Activated CD4-positive, alpha-beta memory T cell treated with anti-CD3 and anti-CD28 coated beads for 36 hours (primary cell): ENCODE measurements at regions of chr4 and their contacts with region 1.

Region 1: GRCh38 chr4:3480528-3481112 is 17.5 kb downstream of the DOK7 start:
- DNase-seq: peak; percentile 83
- H3K4me3 Mint-ChIP-seq: no peak overlapping the region
- H3K27ac Mint-ChIP-seq: no peak overlapping the region
- H3K4me1 Mint-ChIP-seq: peaks cover 2% of the 10 kb centered on the region
- H3K27me3 Mint-ChIP-seq: peaks cover 16% of the 10 kb centered on the region

Region 2: DNA sequence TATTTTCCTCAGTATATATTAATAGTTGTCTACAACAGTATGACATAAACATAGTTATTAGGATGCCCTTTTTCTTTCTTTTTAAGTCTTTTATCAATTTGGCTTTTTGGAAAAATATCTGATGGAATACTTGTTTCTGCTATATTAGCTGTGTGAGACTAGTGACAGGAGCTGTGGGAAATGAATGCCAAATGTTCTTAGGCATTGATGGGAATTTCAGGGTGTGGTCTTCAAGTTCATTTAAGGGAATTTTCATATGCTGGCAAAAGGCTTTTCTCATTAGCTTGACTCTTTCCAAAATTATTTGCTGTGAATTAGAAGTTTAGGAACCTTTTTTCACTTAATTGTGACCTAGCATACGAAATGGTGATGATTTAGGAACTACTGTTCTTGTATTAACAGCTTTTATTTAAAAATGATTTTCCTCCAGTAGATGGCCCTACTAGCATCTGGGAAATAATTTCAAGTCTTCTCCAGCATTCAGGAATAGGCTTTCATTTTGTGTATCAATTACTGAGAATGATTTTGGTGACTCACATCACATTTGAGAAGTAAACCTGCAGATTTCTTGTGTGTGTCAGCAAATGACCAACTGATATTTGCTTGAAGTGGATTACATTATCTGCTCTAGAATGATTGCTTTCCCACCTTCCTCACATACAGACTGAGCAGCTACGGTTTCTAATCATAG is 335.2 kb before region 1 on chr4:
- CTCF ChIA-PET with region 1: no interaction called
- POLR2A ChIA-PET with region 1: no interaction called
- intact Hi-C with region 1: no loop called
- DNase-seq: no peak
- H3K4me3 Mint-ChIP-seq: no peak overlapping the region
- H3K27ac Mint-ChIP-seq: no peak overlapping the region
- H3K4me1 Mint-ChIP-seq: no peaks in the 10 kb centered on the region
- H3K27me3 Mint-ChIP-seq: no peaks in the 10 kb centered on the region

Region 3: DNA sequence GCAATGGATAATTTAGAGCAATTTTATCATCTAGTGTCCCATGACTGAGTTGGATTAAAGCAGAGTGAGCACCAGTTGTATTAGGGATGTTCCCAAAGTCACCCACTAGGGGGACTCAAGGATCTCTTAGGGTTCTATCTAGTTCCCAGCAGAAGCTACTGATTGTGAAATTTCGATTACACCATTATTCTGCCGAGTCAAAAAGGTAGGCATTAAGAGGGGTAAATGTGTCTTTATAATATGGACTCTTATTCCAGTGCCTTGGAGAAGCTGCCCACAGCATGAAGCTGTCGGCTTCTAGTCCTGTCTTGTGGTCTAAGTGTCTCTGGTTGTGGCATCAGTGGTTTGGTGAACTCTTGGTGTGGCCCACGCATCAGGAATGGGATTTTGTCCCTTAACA is 134.5 kb before region 1 on chr4:
- CTCF ChIA-PET with region 1: interaction called, 33 read pairs
- POLR2A ChIA-PET with region 1: no interaction called
- intact Hi-C with region 1: no loop called
- DNase-seq: peak; percentile 28
- H3K4me3 Mint-ChIP-seq: no peak overlapping the region
- H3K27ac Mint-ChIP-seq: no peak overlapping the region
- H3K4me1 Mint-ChIP-seq: peaks cover 18% of the 10 kb centered on the region
- H3K27me3 Mint-ChIP-seq: no peaks in the 10 kb centered on the region

Region 4: DNA sequence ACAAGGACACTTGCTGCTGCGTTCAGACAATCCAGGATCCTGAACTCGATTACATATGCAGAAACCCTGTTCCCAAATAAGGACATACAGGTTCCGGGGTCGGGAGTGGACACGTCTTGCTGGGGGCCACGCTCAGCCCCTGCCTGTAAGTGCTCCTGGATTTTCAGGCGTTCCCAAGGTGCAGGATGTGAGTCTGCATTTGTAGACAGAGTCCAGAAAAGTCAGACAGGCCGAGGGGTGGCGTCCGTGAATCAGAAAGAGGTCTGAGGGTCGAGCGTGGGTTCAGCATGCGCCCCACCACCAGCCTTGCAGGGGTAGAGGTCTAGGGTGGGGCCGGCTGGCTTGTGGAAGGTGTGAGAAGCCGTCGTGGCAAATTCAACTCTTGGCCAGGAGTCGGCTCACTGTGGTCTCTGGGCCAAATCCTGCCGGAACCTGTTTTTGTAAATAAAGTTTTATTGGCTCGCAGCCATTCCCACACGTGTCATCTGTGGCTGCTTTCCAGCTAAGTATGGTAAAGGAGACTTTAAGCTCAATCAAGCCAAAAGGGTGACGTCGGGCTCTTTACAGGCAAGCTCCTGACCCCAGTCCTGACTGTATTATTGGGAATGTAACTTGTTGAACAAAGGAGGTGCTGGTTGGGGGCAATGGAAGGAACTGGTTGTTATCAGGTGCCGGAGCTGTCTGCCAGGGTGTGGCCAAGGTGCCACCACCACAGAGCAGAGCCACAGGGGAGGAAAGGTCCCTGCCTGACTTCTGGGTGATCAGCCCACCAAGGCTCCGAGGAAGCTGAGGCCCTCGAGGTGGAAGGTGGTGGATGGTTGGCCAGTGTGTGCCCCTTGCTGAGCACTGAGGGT is 10.1 kb before region 1 on chr4:
- CTCF ChIA-PET with region 1: interaction called, 20 read pairs
- POLR2A ChIA-PET with region 1: no interaction called
- intact Hi-C with region 1: no loop called
- DNase-seq: no peak
- H3K4me3 Mint-ChIP-seq: no peak overlapping the region
- H3K27ac Mint-ChIP-seq: no peak overlapping the region
- H3K4me1 Mint-ChIP-seq: no peaks in the 10 kb centered on the region
- H3K27me3 Mint-ChIP-seq: peaks cover 3% of the 10 kb centered on the region

Region 5: GRCh38 chr4:3880615-3881120 is 400.0 kb after region 1 on chr4:
- CTCF ChIA-PET with region 1: interaction called, 12 read pairs
- POLR2A ChIA-PET with region 1: no interaction called
- intact Hi-C with region 1: no loop called
- DNase-seq: peak; percentile 82
- H3K4me3 Mint-ChIP-seq: no peak overlapping the region
- H3K27ac Mint-ChIP-seq: no peak overlapping the region
- H3K4me1 Mint-ChIP-seq: peaks cover 13% of the 10 kb centered on the region
- H3K27me3 Mint-ChIP-seq: peaks cover 34% of the 10 kb centered on the region